ENCODE measurements at regions of chr5 and their contacts with region 1.

Region 1: GRCh38 chr5:160030631-160031377 is 21.9 kb downstream of the TTC1 start:
- DNase-seq: no peak
- ATAC-seq: peak in 4 of 8 donors; percentile 12 to 65 (median 32)
- H3K4me3 ChIP-seq: no peak overlapping the region
- H3K27ac ChIP-seq: peak overlapping the region in 4 of 10 donors; percentile 12 to 49 (median 22)
- H3K4me1 ChIP-seq: peaks cover 0 to 52% (median 36%) of the 10 kb centered on the region in 9 donors
- H3K27me3 ChIP-seq: no peaks in the 10 kb centered on the region
- CTCF ChIP-seq: no peak

Region 2: DNA sequence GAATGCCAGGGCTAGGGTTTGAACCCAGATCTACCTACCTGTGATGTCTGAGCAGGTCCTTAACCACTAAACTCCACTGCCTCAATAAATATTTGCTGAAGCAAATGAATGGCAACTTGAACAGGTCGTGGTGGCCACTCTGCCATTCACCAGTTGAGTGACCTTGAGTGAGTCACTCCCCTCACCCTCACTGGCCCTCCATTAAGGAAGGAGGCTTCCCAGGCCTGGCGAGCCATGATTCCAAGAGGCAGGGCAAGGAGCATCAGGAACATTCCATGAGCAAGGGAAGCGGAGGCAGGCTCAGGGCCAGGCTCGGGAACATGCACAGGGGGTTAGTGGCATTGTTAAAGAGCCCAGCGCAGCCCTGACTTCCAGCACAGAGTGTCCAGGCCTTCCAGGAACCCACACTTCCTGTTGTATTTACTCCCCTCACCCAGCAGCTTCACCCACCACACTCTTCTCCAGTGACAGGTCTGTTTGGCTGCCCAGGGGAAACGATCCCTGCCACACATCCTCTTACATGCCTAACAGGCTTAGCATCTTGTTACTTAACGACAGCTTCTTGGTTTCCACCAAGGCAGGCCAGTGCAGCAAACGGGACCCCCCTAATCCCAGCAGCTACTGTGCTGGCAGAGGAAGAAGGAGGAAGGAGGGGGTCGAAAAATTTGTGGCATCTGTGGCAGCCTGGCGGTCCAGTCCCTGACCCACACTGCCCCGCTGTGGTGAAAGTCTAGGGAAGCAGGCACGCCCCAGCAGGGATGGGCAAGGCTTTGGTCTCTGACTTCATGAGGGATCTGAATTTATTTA is 65.6 kb before region 1 on chr5:
- intact Hi-C with region 1: no loop called
- DNase-seq: peak; percentile 39 to 52
- ATAC-seq: peak in 7 of 8 donors; percentile 60 to 86 (median 74)
- H3K4me3 ChIP-seq: no peak overlapping the region
- H3K27ac ChIP-seq: no peak overlapping the region
- H3K4me1 ChIP-seq: peaks cover 0 to 3% (median 0%) of the 10 kb centered on the region in 9 donors
- H3K27me3 ChIP-seq: peaks cover 0 to 39% (median 5%) of the 10 kb centered on the region in 7 donors
- CTCF ChIP-seq: peak; percentile 16 to 77 (median 68)

Region 3: DNA sequence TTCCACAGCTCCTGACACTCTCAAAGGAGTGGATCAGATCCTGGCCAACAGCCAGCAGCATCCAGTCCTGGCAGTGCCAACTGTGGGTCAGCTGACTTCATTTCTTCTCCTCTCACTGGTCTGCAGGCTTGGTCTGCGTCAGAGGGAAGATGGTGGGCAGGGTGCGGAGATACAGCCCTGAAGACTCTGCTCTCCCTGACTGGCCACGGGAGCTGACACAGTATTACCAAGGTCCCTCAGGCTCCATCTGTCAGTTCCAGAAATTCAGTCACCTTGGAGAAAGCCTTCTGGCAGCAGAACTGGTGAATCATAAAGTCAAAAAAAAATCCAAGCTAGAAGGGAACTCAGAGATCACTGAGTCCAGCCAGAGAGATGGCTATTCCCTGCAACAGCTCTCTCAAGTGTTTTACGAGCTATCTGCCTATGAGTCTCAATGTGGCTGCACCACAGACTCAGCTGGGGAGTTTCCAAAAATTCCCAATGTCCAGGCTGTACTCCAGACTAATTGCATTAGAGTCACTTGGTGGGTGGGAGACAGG is 311.7 kb after region 1 on chr5:
- intact Hi-C with region 1: loop called in 2 of 10 experiments (anchors 10 kb)
- DNase-seq: no peak
- ATAC-seq: peak in 2 of 8 donors; percentile 52 to 56
- H3K4me3 ChIP-seq: no peak overlapping the region
- H3K27ac ChIP-seq: no peak overlapping the region
- H3K4me1 ChIP-seq: peaks cover 0 to 20% (median 0%) of the 10 kb centered on the region in 9 donors
- H3K27me3 ChIP-seq: no peaks in the 10 kb centered on the region
- CTCF ChIP-seq: no peak

Region 4: DNA sequence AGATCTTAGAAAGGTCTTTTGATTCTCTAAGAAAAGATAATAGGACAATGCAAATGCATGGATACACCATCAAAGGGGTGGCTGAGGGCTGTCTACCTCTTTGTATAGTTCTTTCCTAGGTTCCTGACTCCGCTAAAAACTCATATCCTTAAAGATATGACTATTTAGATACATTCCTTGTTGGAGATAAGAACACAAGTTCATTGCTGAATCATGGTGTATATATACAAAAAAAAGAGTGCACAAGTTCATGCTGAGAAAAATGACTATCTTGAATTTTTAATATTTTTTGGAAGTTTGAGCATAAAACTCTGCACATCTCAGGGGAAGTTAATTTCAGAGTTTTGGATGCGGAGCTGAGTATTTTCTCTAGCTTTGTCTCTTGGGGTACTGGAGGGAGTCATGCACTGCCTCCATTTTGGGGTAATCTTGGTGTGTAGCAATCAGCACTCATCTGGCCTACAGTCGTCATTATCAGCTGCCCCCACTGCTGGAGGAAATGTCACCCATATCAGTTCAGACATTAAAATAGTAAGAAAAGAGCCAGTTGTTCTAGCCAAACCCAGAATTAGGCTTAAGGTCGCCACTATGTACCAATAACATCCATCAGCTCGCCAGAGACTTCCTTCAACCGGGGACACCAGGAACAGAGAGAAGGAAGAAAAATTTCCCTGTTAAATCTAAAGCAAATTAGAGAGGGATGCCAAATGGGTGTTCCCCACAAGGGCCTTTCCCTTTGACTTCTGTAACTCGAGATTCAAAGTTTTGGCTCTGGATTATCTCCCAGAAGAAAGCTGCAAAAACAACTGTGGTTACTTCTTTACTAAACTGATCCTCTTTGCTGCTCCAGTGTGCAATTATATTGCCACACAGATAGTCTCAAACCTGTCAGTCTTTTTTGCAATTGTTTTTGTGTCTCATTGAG is 439.9 kb after region 1 on chr5:
- intact Hi-C with region 1: no loop called
- DNase-seq: peak in 1 of 2 donors; percentile 7
- ATAC-seq: peak in 4 of 8 donors; percentile 14 to 54 (median 28)
- H3K4me3 ChIP-seq: peak overlapping the region in 1 of 10 donors; percentile 56
- H3K27ac ChIP-seq: peak overlapping the region in 4 of 10 donors; percentile 6 to 62 (median 14)
- H3K4me1 ChIP-seq: peaks cover 3 to 56% (median 22%) of the 10 kb centered on the region in 9 donors
- H3K27me3 ChIP-seq: no peaks in the 10 kb centered on the region
- CTCF ChIP-seq: no peak

Measured in heart right ventricle (tissue), 16 donors.